ENCODE measurements at regions of chr5 and their contacts with region 1.

Region 1: DNA sequence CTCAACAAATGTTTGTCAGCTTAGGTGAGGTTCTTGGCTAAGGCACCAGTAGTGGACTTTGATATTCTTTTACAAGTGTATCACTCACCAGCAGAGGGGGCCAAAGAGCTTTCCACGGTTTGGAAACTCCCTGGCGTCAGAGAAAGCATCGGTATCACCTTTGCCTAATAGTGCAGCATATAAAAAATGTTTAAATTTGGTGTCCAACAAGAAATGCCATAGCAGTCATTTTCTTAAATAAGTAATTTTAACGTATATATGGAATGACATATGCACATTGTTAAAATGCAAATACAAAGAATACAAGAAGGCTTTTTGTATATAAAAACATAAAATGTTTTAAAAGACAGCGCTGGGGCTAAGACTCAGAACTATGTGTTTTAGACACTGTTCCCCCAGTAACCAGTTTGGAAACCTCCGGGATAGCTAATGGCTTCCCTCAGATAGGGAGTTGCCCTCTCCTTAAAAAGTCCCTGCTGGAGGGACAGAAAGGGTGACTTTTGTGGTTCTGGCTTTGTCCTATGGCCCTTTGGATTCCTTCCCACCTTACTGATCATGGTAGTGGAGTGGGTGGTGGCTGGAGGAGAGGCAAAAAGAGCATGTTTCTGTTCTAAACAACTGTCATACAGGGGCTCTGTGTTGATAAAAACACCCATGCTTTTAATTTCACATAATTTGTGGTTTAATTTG is 124.6 kb downstream of the GPBP1 start:
- DNase-seq: peak; percentile 45
- H3K4me3 ChIP-seq: peak overlapping the region in 1 of 2 experiments; percentile 35; a peak in 1 of 4 replicates
- H3K27ac ChIP-seq: peak overlapping the region; percentile 43 to 63; a peak in 3 of 4 replicates
- H3K4me1 ChIP-seq: peaks cover 0 to 5% of the 10 kb centered on the region in 2 experiments; a peak in 3 of 4 replicates
- H3K27me3 ChIP-seq: no peaks in the 10 kb centered on the region
- CTCF ChIP-seq: peak; percentile 89
- EP300 ChIP-seq: no peak
- RAD21 ChIP-seq: peak; percentile 92

Region 2: DNA sequence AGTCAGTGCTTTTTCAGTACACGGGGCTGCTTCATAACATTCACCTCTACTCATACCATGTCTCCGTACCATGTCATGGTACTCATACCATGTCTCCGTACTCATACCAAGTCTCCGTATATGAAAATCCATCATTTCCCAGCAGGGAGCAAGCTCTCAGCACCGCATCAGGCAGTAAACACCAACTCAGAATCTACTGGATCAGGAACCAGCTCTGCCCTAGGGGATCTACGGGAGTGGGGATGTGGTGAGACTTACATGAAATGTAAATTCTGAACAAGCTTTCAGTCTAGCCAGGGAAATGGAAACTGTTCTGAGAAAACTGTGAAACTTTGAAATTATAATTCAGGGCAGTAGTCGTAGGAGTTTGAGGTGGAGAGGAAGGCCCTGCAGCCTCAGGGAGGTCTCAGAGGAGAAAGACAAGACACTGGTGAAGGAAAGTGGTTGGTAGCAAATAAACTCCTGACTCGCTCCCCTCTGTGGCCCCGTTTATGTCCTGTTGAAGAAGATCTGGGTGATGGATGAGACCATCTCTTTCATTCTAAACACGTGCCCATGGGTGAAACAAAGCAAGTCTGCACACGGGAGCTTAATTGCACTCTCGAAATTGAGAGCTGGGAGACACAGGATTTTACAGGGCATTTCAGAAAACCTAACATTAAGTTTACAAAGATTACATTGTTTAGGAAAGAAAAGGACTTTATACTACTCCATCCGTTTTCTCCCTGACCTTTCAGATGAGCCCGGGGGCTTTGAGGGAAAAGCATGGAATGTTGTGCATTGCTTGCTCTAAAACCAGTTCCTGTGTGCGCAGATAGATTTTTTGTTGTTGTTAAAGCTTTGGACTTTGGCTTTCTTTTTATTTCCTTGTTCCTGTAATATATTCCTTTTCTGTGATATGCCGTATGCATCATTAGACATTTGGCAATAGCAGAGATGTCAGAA is 157.3 kb after region 1 on chr5:
- CTCF ChIA-PET with region 1: no interaction called
- POLR2A ChIA-PET with region 1: no interaction called
- DNase-seq: no peak
- H3K4me3 ChIP-seq: no peak overlapping the region
- H3K27ac ChIP-seq: no peak overlapping the region
- H3K4me1 ChIP-seq: peaks cover 14 to 18% of the 10 kb centered on the region in 2 experiments; a peak in 3 of 4 replicates
- H3K27me3 ChIP-seq: no peaks in the 10 kb centered on the region
- CTCF ChIP-seq: no peak
- EP300 ChIP-seq: no peak
- RAD21 ChIP-seq: no peak

Region 3: GRCh38 chr5:57499262-57500050 is 201.0 kb after region 1 on chr5:
- CTCF ChIA-PET with region 1: interaction called, 22 read pairs
- POLR2A ChIA-PET with region 1: no interaction called
- DNase-seq: peak; percentile 36
- H3K4me3 ChIP-seq: no peak overlapping the region
- H3K27ac ChIP-seq: peak overlapping the region; percentile 4 to 56; a peak in 3 of 4 replicates
- H3K4me1 ChIP-seq: peaks cover 20 to 23% of the 10 kb centered on the region in 2 experiments
- H3K27me3 ChIP-seq: no peaks in the 10 kb centered on the region
- CTCF ChIP-seq: peak; percentile 88
- EP300 ChIP-seq: no peak
- RAD21 ChIP-seq: peak; percentile 81

Region 4: DNA sequence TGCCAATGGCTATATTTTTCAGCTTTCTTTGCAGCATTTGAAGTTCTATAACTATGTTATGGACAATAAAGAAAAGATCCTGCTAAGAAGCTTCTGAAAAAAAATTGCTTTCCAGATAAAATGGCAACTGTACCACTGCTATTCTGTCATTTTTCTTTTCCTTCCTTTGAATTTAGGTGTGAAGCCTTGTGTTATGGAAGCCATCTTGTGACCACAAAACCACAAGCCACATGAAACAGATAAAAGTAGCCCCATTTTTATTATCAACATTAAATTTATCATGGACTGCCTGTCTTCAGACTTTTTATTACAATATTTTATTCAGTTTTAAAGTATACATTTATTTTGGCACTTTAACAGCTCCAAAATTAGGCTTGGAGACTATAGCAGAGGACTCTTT is 474.1 kb after region 1 on chr5:
- CTCF ChIA-PET with region 1: interaction called, 51 read pairs
- POLR2A ChIA-PET with region 1: no interaction called
- DNase-seq: no peak
- H3K4me3 ChIP-seq: no peak overlapping the region
- H3K27ac ChIP-seq: no peak overlapping the region
- H3K4me1 ChIP-seq: peaks cover 0 to 2% of the 10 kb centered on the region in 2 experiments; a peak in 2 of 4 replicates
- H3K27me3 ChIP-seq: no peaks in the 10 kb centered on the region
- CTCF ChIP-seq: no peak
- EP300 ChIP-seq: no peak
- RAD21 ChIP-seq: no peak

Region 5: DNA sequence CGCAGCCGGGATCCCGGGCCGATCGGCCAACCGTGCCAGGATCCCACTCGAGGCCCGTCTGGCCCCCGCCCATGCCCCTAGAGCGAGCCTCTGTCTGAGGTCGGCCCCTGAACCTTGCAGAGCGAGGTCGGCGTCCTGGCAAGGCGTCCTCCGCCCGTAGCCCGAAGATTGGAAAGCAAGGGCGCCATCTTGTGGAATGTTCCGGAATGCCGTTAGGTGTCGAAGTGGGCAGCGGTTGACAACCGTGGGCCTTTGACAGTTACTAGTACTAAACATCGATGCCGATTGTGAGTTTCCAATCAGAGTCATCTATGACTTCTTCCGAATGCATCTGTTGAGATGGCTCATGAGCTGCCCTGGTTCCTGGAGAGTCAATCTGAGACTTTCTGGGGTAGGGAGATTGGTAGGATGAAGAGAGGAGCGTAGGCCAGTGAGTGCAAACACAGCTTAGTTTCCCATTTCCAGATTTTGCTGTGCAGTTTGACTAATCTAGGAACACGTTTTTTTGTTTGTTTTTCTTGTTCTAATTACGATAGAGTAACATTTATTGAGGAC is 1162.4 kb after region 1 on chr5:
- CTCF ChIA-PET with region 1: interaction called, 96 read pairs
- POLR2A ChIA-PET with region 1: no interaction called
- DNase-seq: peak; percentile 83
- H3K4me3 ChIP-seq: peak overlapping the region; percentile 90 to 93
- H3K27ac ChIP-seq: peak overlapping the region; percentile 85 to 87
- H3K4me1 ChIP-seq: peaks cover 0 to 7% of the 10 kb centered on the region in 2 experiments; a peak in 2 of 4 replicates
- H3K27me3 ChIP-seq: no peaks in the 10 kb centered on the region
- CTCF ChIP-seq: peak; percentile 76
- EP300 ChIP-seq: 0 out of 4 replicates have a peak, but pooled peaks of 1 of the 2 experiments have one; percentile 14
- RAD21 ChIP-seq: peak; percentile 95

Measured in SK-N-SH (cell line).